GM10248 (cell line): ENCODE measurements at regions of chr12 and their contacts with region 1.

Region 1: DNA sequence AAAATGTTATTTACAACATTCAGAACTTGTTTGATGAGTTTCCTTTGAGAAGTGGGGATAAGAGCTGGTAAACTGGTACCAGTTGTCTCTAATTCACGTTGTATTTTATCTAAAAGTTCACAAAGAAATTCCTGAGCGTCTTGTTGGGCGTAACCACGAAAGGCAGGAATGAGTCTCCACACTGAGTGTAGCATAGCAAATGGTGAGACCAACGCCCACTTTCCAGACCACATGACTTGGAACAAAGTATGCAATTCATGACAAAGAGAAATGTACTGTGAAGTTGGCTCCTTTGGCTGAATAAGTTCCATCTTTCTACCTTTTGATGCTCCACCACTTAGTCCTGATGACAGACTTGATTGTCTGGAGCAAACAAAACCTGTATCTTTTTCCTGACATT is 18.4 kb downstream of the USP44 start:
- DNase-seq: no peak
- CTCF ChIP-seq: no peak

Region 2: GRCh38 chr12:95117178-95117599 is 415.7 kb before region 1 on chr12:
- CTCF ChIA-PET with region 1: interaction called, 101 read pairs
- POLR2A ChIA-PET with region 1: no interaction called
- DNase-seq: peak; percentile 64
- CTCF ChIP-seq: peak; percentile 59

Region 3: GRCh38 chr12:95124106-95124505 is 408.7 kb before region 1 on chr12:
- CTCF ChIA-PET with region 1: interaction called, 101 read pairs
- POLR2A ChIA-PET with region 1: no interaction called
- DNase-seq: no peak
- CTCF ChIP-seq: no peak

Region 4: DNA sequence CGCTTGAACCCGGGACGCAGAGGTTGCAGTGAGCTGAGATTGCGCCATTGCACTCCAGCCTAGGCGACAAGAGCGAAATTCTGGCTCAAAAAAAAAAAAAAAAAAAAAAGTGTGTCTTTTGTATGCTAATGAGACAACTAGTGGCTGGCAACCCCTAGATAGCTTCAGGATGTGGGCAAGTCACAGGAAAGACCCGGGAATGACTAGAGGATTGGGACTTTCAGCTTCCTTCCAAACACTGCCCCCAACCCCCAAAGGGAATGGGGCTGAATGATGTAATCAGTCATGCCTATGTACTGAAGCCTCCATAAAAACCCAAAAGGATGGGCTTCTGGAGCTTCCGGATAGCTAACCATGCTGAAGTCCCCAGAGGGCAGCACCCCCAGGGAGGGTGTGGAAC is 10.2 kb before region 1 on chr12:
- CTCF ChIA-PET with region 1: interaction called, 16 read pairs
- POLR2A ChIA-PET with region 1: no interaction called
- DNase-seq: no peak
- CTCF ChIP-seq: no peak

Region 5: DNA sequence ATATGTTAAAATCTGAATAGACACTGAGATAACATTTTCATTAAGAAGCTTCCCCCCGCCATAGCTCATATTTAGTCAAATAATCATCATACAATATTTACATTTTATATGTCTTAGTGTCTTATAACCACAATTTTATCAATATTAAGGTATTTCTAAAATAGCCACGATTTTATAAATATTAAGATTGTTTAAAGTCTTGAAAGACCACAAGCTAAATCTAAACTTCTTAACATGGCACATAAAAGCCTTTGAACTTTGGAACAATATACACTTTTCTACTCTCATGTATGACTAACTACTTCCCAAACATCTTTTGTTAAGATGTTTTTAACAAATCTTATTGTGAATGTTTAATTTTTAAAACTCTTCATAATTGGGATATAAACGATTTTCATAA is 11.9 kb after region 1 on chr12:
- CTCF ChIA-PET with region 1: interaction called, 12 read pairs
- POLR2A ChIA-PET with region 1: no interaction called
- DNase-seq: no peak
- CTCF ChIP-seq: no peak